ENCODE measurements at regions of chr1 and their contacts with region 1.

Region 1: DNA sequence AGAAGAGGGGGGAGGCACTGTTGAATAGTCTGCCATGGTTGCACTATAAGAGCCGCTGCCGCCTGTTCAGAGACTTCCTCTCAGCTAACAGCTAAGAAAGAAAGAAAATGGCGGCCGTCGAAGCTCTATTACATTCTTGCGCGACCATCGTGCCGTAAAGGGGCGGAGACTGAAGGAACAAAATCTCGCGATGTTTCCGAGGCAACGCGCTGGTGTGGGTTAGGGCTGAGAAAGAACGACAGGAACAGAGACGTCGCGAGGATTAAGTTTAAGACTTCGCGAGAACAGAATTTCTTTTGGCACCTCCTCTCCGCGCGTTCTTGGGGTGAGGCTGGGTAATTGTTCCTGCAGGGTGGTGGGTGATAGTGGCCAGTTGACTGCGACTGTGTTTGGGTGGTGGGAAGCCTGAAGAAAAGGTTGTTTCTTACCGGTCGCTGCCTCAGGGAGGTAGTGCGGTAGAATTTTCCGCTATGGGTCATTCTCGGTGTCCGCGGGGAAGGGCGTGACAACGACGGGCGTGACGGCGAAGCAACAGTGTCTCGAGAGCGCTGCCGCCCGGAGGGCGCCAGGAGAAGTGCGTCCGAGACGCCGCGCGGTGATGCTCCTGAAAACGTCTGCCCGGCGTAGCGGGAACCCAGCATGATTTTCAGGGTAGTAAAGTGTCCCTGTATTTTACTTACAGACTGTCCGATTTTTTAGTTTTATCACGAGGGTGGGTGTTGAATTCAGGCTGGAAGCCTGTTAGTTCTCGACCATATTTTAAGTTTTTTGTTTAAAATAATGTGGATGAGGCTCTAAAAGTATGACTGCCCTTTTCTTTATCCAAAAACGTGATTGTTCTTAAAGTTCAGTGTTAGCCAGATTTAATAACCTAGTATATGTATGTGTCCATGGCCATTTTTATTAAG is at the start of gene FUBP1:
- DNase-seq: peak; percentile 98
- H3K4me3 ChIP-seq: peak within 1 kb of the TSS; percentile 63 to 85 (median 82)
- H3K27ac ChIP-seq: peak within 1 kb of the TSS; percentile 91 to 99 (median 97)
- H3K4me1 ChIP-seq: peaks cover 0 to 47% (median 44%) of the 10 kb centered on the region in 4 donors
- H3K27me3 ChIP-seq: no peaks in the 10 kb centered on the region
- CTCF ChIP-seq: peak; percentile 61 to 80 (median 66)
- EP300 ChIP-seq: peak in 1 of 4 donors; percentile 32
- POLR2A ChIP-seq: peak; percentile 58 to 63
- total RNA-seq, gene FUBP1: 60.6 to 79.2 (median 71.3) TPM

Region 2: GRCh38 chr1:77582905-77583304 is 396.3 kb before region 1 on chr1:
- intact Hi-C with region 1: loop called (anchors 10 kb)
- DNase-seq: no peak
- H3K4me3 ChIP-seq: no peak overlapping the region
- H3K27ac ChIP-seq: no peak overlapping the region
- H3K4me1 ChIP-seq: no peaks in the 10 kb centered on the region
- H3K27me3 ChIP-seq: no peaks in the 10 kb centered on the region
- CTCF ChIP-seq: no peak
- EP300 ChIP-seq: no peak
- POLR2A ChIP-seq: no peak

Region 3: GRCh38 chr1:77683160-77684148 is 295.8 kb before region 1 on chr1:
- intact Hi-C with region 1: loop called (anchors 5 kb)
- DNase-seq: peak; percentile 96
- H3K4me3 ChIP-seq: peak overlapping the region; percentile 75 to 93 (median 88)
- H3K27ac ChIP-seq: peak overlapping the region; percentile 93 to 97 (median 94)
- H3K4me1 ChIP-seq: peaks cover 0 to 43% (median 34%) of the 10 kb centered on the region in 4 donors
- H3K27me3 ChIP-seq: no peaks in the 10 kb centered on the region
- CTCF ChIP-seq: peak; percentile 49 to 90 (median 79)
- EP300 ChIP-seq: no peak
- POLR2A ChIP-seq: no peak

Region 4: DNA sequence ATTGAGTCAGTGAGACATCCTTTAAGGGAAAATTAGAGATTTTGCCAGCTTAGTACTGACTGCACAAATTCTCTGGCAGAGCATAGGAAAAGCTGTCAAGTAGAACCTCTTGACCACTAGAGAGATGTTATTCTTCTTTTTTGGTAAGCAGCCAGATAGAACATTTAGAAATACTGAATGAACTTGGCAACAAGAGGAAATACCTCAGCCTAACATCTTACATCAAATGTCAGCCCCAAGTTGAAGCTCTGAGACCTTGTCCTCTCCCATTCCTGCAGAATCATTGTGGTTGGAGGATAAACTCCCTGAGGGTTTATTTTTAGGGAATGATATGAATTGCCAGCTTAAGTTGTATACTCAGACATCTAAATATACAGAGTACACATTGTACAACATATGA is 146.3 kb before region 1 on chr1:
- intact Hi-C with region 1: loop called (anchors 10 kb)
- DNase-seq: no peak
- H3K4me3 ChIP-seq: no peak overlapping the region
- H3K27ac ChIP-seq: peak overlapping the region; percentile 68 to 89 (median 82)
- H3K4me1 ChIP-seq: peaks cover 0 to 68% (median 60%) of the 10 kb centered on the region in 4 donors
- H3K27me3 ChIP-seq: no peaks in the 10 kb centered on the region
- CTCF ChIP-seq: no peak
- EP300 ChIP-seq: peak in 2 of 4 donors; percentile 36 to 58
- POLR2A ChIP-seq: no peak

Region 5: GRCh38 chr1:78004719-78005447 is 25.7 kb after region 1 on chr1 and contains the start of gene DNAJB4:
- intact Hi-C with region 1: loop called (anchors 1 kb)
- DNase-seq: peak; percentile 90
- H3K4me3 ChIP-seq: peak within 1 kb of the TSS; percentile 42 to 59 (median 57)
- H3K27ac ChIP-seq: peak within 1 kb of the TSS; percentile 86 to 89 (median 88)
- H3K4me1 ChIP-seq: peaks cover 0 to 51% (median 30%) of the 10 kb centered on the region in 4 donors
- H3K27me3 ChIP-seq: no peaks in the 10 kb centered on the region
- CTCF ChIP-seq: no peak
- EP300 ChIP-seq: peak in 2 of 4 donors; percentile 36 to 88
- POLR2A ChIP-seq: peak; percentile 98 to 99
- total RNA-seq, gene DNAJB4: 29.6 to 41.7 (median 37.4) TPM

Region 6: DNA sequence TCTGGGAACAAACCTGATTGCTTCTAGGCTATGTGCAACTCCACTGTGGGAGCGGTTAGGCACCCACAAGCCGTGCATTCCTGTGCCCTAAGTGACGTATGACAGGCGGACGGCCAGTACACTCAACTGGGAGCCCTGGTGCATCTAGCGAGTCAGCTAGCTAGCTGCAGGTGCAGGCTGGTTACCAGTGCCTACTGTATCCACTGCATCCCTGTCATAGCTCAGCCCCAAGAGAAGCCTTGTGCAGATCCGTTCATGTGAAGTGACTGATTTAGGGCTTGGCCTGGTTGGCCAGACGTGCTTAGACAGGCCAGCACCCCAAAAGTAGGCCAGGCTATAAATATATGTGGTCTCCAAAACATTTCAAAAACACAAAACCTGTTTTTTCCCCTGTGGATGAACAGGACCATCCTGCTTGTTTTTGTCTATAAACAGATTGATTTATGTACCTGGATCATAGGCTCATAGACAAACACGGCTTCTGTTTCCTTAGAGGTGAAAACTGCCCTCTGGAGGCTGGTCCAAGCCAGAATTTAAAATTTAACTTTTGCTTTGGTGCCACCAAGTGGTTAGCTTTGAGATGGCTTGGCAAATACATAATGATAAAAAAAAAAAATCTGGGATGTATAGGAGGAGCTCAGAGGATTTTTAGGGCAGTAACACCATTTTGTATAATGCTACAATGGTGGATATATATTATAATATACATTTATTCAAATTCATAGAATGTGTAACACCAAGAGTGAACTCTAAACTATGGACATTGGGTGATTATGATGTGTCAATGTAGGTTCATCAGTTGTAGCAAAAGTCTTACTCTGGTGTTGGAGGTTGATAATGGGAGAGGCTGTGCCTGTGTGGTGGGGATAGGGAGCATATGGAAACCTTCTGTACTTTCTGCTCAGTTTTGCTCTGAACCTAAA is 135.1 kb after region 1 on chr1:
- intact Hi-C with region 1: loop called (anchors 2 kb)
- DNase-seq: no peak
- H3K4me3 ChIP-seq: no peak overlapping the region
- H3K27ac ChIP-seq: peak overlapping the region in 2 of 4 donors; percentile 11 to 16
- H3K4me1 ChIP-seq: peaks cover 0 to 6% (median 0%) of the 10 kb centered on the region in 4 donors
- H3K27me3 ChIP-seq: no peaks in the 10 kb centered on the region
- CTCF ChIP-seq: peak; percentile 53 to 85 (median 80)
- EP300 ChIP-seq: no peak
- POLR2A ChIP-seq: no peak

Region 7: GRCh38 chr1:78333502-78333901 is 354.3 kb after region 1 on chr1:
- intact Hi-C with region 1: no loop called
- DNase-seq: no peak
- H3K4me3 ChIP-seq: no peak overlapping the region
- H3K27ac ChIP-seq: no peak overlapping the region
- H3K4me1 ChIP-seq: no peaks in the 10 kb centered on the region
- H3K27me3 ChIP-seq: no peaks in the 10 kb centered on the region
- CTCF ChIP-seq: peak in 2 of 4 experiments; percentile 42 to 53
- EP300 ChIP-seq: no peak
- POLR2A ChIP-seq: no peak